Activated naive CD4-positive, alpha-beta T cell treated with anti-CD3 and anti-CD28 coated beads for 36 hours (primary cell): ENCODE measurements at regions of chr6 and their contacts with region 1.

Region 1: GRCh38 chr6:125301435-125302391 is at the start of gene HDDC2:
- DNase-seq: peak; percentile 38
- H3K4me3 Mint-ChIP-seq: peak within 1 kb of the TSS; percentile 88
- H3K27ac Mint-ChIP-seq: peak within 1 kb of the TSS; percentile 93
- H3K4me1 Mint-ChIP-seq: peaks cover 48% of the 10 kb centered on the region
- H3K27me3 Mint-ChIP-seq: no peaks in the 10 kb centered on the region
- total RNA-seq, gene HDDC2: 117 to 127 TPM

Region 2: DNA sequence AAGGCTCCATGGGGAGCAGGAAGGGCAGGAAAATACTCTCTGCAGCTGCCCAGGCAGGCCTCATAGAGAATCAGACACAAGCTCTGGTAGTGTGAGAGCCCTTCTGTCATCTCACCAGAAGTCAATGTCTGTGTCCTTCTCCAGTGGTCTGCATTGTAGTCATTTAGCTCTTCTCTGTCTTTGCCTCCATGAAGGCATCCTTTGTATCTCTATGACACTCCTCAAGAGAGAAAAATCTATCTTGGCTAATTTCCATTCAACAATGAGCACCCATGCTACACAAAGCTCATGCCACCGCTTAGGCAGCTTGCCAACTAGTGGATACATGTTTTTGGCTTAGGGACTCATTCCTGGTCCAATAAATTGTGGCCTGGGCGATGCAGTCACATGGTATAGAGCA is 247.4 kb before region 1 on chr6:
- CTCF ChIA-PET with region 1: no interaction called
- intact Hi-C with region 1: no loop called
- DNase-seq: no peak
- H3K4me3 Mint-ChIP-seq: no peak overlapping the region
- H3K27ac Mint-ChIP-seq: no peak overlapping the region
- H3K4me1 Mint-ChIP-seq: no peaks in the 10 kb centered on the region
- H3K27me3 Mint-ChIP-seq: no peaks in the 10 kb centered on the region

Region 3: GRCh38 chr6:125153391-125154117 is 148.2 kb before region 1 on chr6 and contains the start of gene TPD52L1:
- CTCF ChIA-PET with region 1: no interaction called
- intact Hi-C with region 1: loop called (anchors 5 kb)
- DNase-seq: peak; percentile 73
- H3K4me3 Mint-ChIP-seq: peak within 1 kb of the TSS; percentile 74
- H3K27ac Mint-ChIP-seq: no peak within 1 kb of the TSS
- H3K4me1 Mint-ChIP-seq: peaks cover 6% of the 10 kb centered on the region
- H3K27me3 Mint-ChIP-seq: peaks cover 28% of the 10 kb centered on the region
- total RNA-seq, gene TPD52L1: 5.6 to 5.7 TPM

Region 4: DNA sequence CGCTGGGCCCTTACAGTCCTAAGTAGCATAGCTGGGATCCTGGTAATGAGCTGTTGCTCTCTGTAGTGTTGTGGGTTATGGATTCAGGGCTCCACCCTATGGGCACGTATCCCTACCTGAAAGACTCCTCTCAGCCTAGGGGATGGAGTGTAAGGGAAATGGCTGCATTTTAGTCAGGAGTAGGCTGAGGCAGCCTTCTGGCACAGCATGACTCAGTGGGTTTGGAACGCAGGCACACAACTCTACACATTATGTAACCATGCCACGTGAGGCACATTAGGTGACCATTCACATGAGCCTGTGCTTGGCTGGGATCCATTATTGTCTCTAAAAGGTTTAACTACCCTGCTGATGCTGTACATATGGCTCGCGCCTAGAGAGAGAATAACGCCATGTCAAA is 27.7 kb before region 1 on chr6:
- CTCF ChIA-PET with region 1: no interaction called
- intact Hi-C with region 1: no loop called
- DNase-seq: no peak
- H3K4me3 Mint-ChIP-seq: no peak overlapping the region
- H3K27ac Mint-ChIP-seq: no peak overlapping the region
- H3K4me1 Mint-ChIP-seq: peaks cover 4% of the 10 kb centered on the region
- H3K27me3 Mint-ChIP-seq: no peaks in the 10 kb centered on the region

Region 5: DNA sequence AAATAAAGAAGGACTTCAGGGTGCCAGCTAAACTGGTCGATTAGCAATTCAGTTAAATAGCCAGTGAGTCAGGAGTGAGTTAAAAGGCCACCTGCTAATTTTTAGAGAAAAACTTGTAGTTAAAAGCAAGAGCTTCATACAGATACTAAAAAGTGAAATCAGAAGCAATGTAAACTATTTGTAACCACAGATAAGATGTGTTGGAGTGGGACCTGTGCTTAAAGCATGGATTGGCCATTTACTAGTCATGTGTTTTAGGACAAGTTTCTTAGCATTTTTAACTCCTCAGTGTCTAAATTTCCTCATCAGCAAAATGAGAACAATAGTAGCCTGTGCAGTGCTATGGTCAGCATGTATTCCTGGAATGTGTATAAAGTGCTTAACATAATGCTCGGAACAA is 23.9 kb after region 1 on chr6:
- CTCF ChIA-PET with region 1: no interaction called
- intact Hi-C with region 1: no loop called
- DNase-seq: no peak
- H3K4me3 Mint-ChIP-seq: no peak overlapping the region
- H3K27ac Mint-ChIP-seq: no peak overlapping the region
- H3K4me1 Mint-ChIP-seq: no peaks in the 10 kb centered on the region
- H3K27me3 Mint-ChIP-seq: peaks cover 6% of the 10 kb centered on the region

Region 6: GRCh38 chr6:127266178-127266891 is 1964.6 kb after region 1 on chr6 and contains the start of gene RNF146:
- CTCF ChIA-PET with region 1: no interaction called
- intact Hi-C with region 1: loop called (anchors 10 kb)
- DNase-seq: peak; percentile 74
- H3K4me3 Mint-ChIP-seq: peak within 1 kb of the TSS; percentile 100
- H3K27ac Mint-ChIP-seq: peak within 1 kb of the TSS; percentile 100
- H3K4me1 Mint-ChIP-seq: peaks cover 25% of the 10 kb centered on the region
- H3K27me3 Mint-ChIP-seq: no peaks in the 10 kb centered on the region
- total RNA-seq, gene RNF146: 9.7 to 10.8 TPM